ENCODE measurements at regions of chr1 and their contacts with region 1.

Region 1: DNA sequence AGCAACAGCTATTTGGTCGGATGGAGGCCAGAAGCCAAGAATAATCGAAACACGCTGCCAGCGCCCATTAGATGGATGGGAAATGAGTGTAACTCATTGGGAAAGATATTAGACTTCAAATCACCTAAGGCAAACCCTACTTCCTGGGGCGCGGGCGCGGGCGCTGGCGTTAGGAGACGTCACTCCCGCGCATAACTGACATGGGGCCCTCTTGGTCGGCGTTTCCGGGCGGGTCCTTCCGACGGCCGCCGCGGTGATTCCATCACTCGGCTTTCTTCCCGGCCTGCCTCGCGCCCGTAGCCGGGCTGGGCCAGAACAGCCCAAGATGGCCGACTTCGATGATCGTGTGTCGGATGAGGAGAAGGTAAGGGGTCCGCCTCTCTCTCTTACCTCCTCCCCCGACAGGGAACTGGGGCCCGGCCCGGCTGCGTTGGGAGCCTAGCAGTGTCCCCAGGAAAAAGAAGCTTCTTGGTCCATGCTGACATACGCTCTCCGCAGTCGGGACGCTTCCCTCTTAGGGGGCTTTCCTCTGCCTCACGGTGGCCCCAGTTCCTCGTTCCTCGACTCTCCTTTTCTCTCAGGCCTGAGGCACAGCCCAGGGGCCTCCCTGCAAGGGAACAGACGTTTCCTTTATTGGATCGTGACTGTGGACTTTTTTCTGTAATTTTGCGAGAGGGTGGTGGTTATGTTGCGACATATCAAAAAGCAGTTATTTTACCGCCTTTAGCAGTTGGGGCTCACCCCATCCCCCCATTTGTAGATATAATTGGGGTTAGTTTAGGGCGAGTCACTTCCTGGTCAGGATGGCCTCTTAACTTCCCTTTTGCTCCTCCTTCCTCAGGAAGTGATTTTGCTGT is at the start of gene CAPZA1:
- DNase-seq: peak; percentile 92 to 95
- ATAC-seq: peak; percentile 78 to 94 (median 87)
- H3K4me3 ChIP-seq: peak within 1 kb of the TSS; percentile 52
- H3K4me3 Mint-ChIP-seq: peak within 1 kb of the TSS; percentile 98
- H3K27ac ChIP-seq: peak within 1 kb of the TSS; percentile 86
- H3K27ac Mint-ChIP-seq: peak within 1 kb of the TSS; percentile 94 to 99
- H3K4me1 ChIP-seq: peaks cover 26% of the 10 kb centered on the region
- H3K4me1 Mint-ChIP-seq: peaks cover 44% of the 10 kb centered on the region in 2 donors
- H3K27me3 ChIP-seq: no peaks in the 10 kb centered on the region
- H3K27me3 Mint-ChIP-seq: no peaks in the 10 kb centered on the region
- CTCF ChIP-seq: no peak
- total RNA-seq, gene CAPZA1: 231 to 244 (median 233) TPM

Region 2: DNA sequence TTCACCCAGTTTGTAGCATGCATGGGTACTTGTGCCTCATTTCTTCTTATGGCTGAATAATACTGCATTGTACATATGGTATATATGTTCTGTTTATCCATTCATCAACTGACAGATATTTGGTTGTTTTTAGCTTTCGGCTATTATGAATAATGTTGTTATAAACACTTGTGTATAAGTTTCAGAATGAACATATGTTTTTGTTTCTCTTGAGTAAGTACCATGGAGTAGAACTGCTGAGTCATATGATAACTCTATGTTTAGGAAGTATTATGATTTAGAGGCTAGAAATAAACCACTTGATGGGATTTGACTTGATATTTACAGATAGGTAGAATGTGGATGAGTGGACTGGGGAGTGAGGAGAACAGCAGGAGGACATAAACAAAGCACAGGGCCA is 62.4 kb before region 1 on chr1:
- intact Hi-C with region 1: loop called (anchors 10 kb)
- DNase-seq: no peak
- ATAC-seq: no peak
- H3K4me3 ChIP-seq: no peak overlapping the region
- H3K4me3 Mint-ChIP-seq: no peak overlapping the region
- H3K27ac ChIP-seq: no peak overlapping the region
- H3K27ac Mint-ChIP-seq: no peak overlapping the region
- H3K4me1 ChIP-seq: no peaks in the 10 kb centered on the region
- H3K4me1 Mint-ChIP-seq: no peaks in the 10 kb centered on the region
- H3K27me3 ChIP-seq: no peaks in the 10 kb centered on the region
- H3K27me3 Mint-ChIP-seq: no peaks in the 10 kb centered on the region
- CTCF ChIP-seq: no peak

Region 3: GRCh38 chr1:112674439-112674985 is 54.8 kb after region 1 on chr1 and contains the start of gene MOV10:
- intact Hi-C with region 1: loop called (anchors 1 kb)
- DNase-seq: peak; percentile 66 to 82
- ATAC-seq: peak; percentile 82 to 87 (median 82)
- H3K4me3 ChIP-seq: peak within 1 kb of the TSS; percentile 84
- H3K4me3 Mint-ChIP-seq: peak within 1 kb of the TSS; percentile 97
- H3K27ac ChIP-seq: peak within 1 kb of the TSS; percentile 87
- H3K27ac Mint-ChIP-seq: peak within 1 kb of the TSS; percentile 95 to 98
- H3K4me1 ChIP-seq: peaks cover 18% of the 10 kb centered on the region
- H3K4me1 Mint-ChIP-seq: peaks cover 52 to 62% of the 10 kb centered on the region in 2 donors
- H3K27me3 ChIP-seq: no peaks in the 10 kb centered on the region
- H3K27me3 Mint-ChIP-seq: no peaks in the 10 kb centered on the region
- CTCF ChIP-seq: no peak
- total RNA-seq, gene MOV10: 87.9 to 124 (median 119) TPM

Region 4: GRCh38 chr1:112700290-112701226 is 80.8 kb after region 1 on chr1:
- intact Hi-C with region 1: loop called (anchors 1 kb)
- DNase-seq: peak; percentile 74 to 90
- ATAC-seq: peak; percentile 66 to 71 (median 70)
- H3K4me3 ChIP-seq: no peak overlapping the region
- H3K4me3 Mint-ChIP-seq: peak overlapping the region; percentile 65
- H3K27ac ChIP-seq: peak overlapping the region; percentile 94
- H3K27ac Mint-ChIP-seq: peak overlapping the region; percentile 90 to 93
- H3K4me1 ChIP-seq: peaks cover 84% of the 10 kb centered on the region
- H3K4me1 Mint-ChIP-seq: peaks cover 71 to 78% of the 10 kb centered on the region in 2 donors
- H3K27me3 ChIP-seq: no peaks in the 10 kb centered on the region
- H3K27me3 Mint-ChIP-seq: no peaks in the 10 kb centered on the region
- CTCF ChIP-seq: no peak

Region 5: DNA sequence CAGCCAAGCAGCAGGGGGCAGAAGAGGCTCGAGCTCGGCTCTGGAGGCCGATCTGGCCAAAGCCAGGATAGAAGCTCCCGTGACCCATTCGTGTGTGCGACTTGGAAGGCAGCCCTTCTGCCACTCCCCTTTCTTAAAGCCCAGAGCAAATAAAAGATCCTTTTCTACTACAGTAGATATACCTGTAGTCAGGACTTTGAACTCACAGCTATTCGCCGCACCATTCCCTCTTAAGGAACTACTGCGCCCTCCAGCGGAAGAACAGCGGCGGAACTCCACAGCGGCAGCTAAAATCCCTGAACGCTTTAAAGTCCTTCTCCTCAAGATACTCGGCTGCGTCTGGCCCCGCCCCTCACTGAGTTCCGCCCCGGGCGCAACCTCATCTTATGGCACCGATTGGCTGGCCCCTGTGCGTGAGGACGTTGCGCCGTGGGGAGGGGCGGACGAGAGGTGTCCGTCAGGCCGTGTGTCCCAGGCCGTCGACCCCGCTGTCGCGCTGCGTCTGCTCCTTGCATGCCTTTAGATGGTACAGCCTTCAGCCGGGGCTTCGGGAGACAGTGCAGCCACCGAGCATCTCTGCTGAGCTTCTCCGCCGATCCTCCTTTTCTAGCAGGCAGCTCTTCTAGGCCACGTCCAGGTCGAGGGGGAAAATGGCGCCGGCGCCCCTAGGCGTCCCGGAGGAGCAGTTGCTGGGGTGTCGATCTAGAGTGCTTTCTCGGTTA is 453.2 kb after region 1 on chr1 and contains the start of gene LRIG2:
- intact Hi-C with region 1: loop called (anchors 5 kb)
- DNase-seq: peak; percentile 95 to 98
- ATAC-seq: peak; percentile 95 to 99 (median 95)
- H3K4me3 ChIP-seq: peak within 1 kb of the TSS; percentile 72
- H3K4me3 Mint-ChIP-seq: peak within 1 kb of the TSS; percentile 97
- H3K27ac ChIP-seq: peak within 1 kb of the TSS; percentile 58
- H3K27ac Mint-ChIP-seq: peak within 1 kb of the TSS; percentile 95 to 99
- H3K4me1 ChIP-seq: peaks cover 10% of the 10 kb centered on the region
- H3K4me1 Mint-ChIP-seq: peaks cover 19 to 36% of the 10 kb centered on the region in 2 donors
- H3K27me3 ChIP-seq: no peaks in the 10 kb centered on the region
- H3K27me3 Mint-ChIP-seq: no peaks in the 10 kb centered on the region
- CTCF ChIP-seq: peak; percentile 88
- total RNA-seq, gene LRIG2: 20.2 to 28.5 (median 23.7) TPM

Region 6: DNA sequence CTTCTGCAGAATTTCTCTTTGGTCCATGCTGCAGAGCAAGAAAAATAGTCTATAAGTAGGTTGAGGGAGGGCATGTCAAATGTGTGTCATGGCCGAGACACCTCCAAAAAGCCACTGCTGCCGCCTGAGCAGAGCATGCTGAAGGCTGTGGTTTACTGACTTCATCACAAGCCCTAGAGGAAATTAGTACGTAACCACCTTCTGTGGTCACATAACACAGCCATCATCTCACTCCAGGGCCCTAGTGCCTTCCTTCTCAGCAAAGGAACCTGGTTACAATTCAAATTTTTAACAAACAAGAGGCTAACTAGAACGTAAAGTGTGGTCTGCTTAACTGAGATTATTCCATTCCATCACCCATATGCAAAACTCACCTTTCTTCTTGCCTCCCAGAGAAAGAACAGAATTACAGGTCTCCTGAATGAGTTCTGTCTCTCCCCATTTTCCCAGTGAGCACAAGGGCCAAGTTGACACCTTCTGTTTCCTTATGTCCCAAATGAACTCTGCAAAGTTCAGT is 1251.9 kb after region 1 on chr1 and contains the start of gene PTPN22:
- intact Hi-C with region 1: loop called (anchors 5 kb)
- DNase-seq: peak; percentile 75 to 94
- ATAC-seq: peak; percentile 75 to 93 (median 92)
- H3K4me3 ChIP-seq: peak within 1 kb of the TSS; percentile 70
- H3K4me3 Mint-ChIP-seq: peak within 1 kb of the TSS; percentile 94
- H3K27ac ChIP-seq: peak within 1 kb of the TSS; percentile 92
- H3K27ac Mint-ChIP-seq: peak within 1 kb of the TSS; percentile 87 to 95
- H3K4me1 ChIP-seq: peaks cover 49% of the 10 kb centered on the region
- H3K4me1 Mint-ChIP-seq: peaks cover 78 to 85% of the 10 kb centered on the region in 2 donors
- H3K27me3 ChIP-seq: no peaks in the 10 kb centered on the region
- H3K27me3 Mint-ChIP-seq: no peaks in the 10 kb centered on the region
- CTCF ChIP-seq: no peak
- total RNA-seq, gene PTPN22: 98.4 to 122 (median 104) TPM

Measured in natural killer cell (primary cell).